Brain microvascular endothelial cell (primary cell): ENCODE measurements at regions of chr11 and their contacts with region 1.

Region 1: GRCh38 chr11:74449369-74449931 is 17.9 kb downstream of the KCNE3 start:
- DNase-seq: peak; percentile 83
- H3K4me3 ChIP-seq: no peak overlapping the region
- H3K27ac ChIP-seq: no peak overlapping the region
- H3K27me3 ChIP-seq: no peaks in the 10 kb centered on the region
- CTCF ChIP-seq: peak; percentile 77

Region 2: DNA sequence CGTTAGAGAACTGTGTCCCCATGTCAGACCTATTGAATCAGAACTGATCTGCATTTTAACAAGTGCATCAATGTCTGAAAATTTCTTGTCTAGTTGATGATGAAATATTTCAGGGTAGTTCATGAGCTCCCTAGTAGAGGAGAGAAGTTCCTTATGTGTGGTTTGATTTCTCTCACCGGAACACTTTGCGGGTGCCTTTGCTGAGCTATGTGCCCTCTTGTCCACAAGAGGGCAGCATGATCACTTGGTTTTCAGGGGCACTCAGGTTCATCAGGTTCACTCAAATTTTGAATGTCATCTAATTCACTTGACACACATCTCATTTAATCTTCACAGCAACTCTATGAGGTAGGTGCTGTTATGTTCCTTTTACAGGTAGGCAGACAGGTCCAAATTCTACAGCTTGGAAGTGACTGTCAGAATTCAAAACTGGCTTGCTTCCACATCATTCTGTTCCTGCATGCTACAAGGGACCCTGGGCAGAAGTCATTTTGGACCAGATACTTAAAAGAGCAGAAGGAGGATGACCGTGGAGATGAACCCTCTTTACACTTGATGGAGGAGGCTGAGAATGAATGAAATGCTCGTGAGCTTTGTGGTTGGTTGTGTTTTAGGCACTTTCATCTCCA is 193.6 kb before region 1 on chr11:
- in situ Hi-C with region 1: loop called (anchors 25 kb)
- DNase-seq: peak; percentile 21
- H3K4me3 ChIP-seq: no peak overlapping the region
- H3K27ac ChIP-seq: no peak overlapping the region
- H3K27me3 ChIP-seq: no peaks in the 10 kb centered on the region
- CTCF ChIP-seq: peak; percentile 92

Region 3: DNA sequence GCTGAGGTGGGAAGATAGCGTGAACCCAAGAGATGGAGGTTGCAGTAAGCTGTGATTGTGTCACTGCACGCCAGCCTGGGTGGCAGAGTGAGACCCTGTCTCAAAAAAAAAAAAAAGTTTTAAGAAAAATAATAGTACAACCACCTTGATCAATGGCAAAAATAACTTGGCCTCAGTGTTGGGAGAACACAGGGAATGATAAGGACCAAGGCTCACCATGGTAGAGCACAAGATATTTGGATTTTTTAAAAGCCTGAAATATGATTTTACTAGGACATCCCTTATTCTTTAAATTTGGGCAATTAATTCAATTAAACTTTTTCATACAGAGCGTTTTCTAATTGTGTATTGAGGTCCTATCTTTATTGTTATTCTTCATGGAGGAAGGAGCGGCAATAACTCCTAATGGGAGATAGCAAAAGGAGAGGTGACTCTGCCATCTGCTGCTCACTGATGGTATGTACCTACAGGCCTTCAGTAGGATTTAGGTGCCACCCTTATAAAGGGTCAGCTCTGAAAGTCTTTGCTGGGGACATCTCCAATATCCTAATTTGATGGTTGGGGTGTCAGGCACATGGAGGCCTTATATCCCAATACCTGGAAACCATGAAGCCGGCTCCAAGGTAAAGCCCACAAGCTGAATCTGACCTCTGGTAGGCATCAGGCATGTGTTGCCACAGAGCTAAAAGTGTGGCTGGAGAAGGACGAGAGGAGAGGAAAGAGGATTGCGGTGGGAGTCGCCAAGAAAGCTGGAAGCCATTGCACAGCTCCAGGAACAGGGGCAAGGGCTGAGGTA is 121.0 kb after region 1 on chr11:
- in situ Hi-C with region 1: loop called (anchors 25 kb)
- DNase-seq: peak; percentile 58
- H3K4me3 ChIP-seq: no peak overlapping the region
- H3K27ac ChIP-seq: no peak overlapping the region
- H3K27me3 ChIP-seq: no peaks in the 10 kb centered on the region
- CTCF ChIP-seq: peak; percentile 80

Region 4: DNA sequence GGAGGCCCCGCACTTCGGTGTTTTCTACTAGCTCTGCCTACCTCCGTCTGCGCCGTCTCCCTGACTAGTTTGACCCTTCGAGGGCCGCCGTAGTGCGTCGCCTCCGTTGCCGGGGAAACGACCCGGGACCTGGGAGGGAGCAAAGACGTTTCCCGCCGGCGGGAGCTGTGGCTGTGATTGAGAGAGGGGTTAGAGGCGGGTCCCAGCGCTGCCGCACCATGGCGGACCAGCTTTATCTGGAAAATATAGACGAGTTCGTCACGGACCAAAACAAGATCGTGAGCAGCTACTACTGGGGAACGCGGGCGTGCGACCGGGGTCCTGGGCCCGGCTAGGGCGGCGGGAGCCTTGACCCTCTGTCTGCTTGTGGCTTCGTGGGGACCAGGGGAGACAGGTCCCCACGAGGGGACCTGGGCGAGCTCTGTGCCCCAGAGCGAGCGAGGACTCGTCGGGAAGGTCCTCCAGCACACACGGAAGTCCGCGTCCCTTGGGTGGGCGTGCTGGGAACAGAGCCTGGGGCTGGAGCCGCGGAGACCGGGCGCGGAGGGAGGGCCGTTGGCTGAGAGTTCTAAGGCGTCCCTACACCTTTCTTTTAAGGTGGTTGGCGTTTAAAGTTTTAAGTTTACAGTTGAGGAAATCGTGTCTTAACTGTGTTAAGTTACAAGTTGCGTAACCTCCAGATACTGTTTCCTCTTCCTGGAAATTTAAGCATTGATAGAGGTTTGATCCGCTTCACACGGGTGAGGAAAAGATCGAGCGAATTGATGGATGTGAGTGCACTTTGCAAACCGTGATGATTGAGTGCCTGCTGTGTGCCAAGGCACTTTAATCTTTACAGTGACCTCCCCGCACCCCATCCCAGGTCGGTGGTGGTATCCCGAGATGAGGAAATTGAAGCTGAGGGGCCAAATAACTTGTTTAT is 143.3 kb after region 1 on chr11 and contains the start of gene POLD3:
- in situ Hi-C with region 1: no loop called
- DNase-seq: peak; percentile 88
- H3K4me3 ChIP-seq: peak within 1 kb of the TSS; percentile 90
- H3K27ac ChIP-seq: peak within 1 kb of the TSS; percentile 44
- H3K27me3 ChIP-seq: no peaks in the 10 kb centered on the region
- CTCF ChIP-seq: no peak